MCF 10A (cell line): ENCODE measurements at regions of chr3 and their contacts with region 1.

Region 1: DNA sequence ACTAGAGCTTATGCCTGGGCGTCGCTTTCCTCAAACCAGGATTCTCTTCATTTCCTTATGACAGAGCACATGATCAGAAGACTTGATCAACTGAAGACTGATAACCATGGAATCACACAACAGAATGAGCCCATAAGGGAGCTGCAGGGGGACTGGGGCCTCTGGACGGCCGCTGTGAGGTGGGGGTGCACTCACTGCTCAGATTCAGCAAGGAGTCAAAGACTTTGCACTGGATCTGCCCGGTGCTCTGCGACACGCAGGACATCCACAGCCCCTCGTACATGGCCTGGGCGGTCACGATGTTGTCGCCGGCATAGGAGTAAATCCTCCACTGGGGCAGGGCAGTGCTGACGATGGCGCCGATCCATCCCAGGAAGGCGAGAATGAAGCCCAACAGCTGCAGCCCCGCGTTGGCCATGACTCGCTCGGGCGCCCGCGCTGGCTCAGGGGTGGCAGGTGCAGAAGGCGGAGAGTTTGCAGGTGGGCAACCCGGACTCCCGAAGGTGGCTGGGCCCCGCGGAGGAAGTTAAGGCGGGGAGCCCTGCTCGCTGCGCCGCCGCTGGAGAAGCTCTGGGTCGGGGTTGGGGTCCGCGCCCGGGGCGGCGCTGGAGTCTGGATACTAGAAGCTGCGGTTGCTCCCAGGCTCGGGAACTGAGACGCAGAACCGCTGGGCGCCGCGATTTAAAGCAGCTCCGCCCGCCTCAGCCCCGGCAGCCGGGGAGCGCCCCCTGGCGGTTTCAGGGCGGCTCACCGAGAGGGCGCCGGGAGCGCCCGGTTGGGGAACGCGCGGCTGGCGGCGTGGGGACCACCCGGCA is at the start of gene CLDN1:
- DNase-seq: peak; percentile 84
- H3K4me3 Mint-ChIP-seq: peak within 1 kb of the TSS; percentile 95
- H3K27ac Mint-ChIP-seq: peak within 1 kb of the TSS; percentile 96
- H3K4me1 Mint-ChIP-seq: peaks cover 51% of the 10 kb centered on the region
- H3K27me3 Mint-ChIP-seq: no peaks in the 10 kb centered on the region
- CTCF ChIP-seq: peak; percentile 92
- total RNA-seq, gene CLDN1: 197 and 263 TPM in 2 replicates

Region 2: GRCh38 chr3:189961525-189962161 is 360.4 kb before region 1 on chr3:
- CTCF ChIA-PET with region 1: interaction called, 8 read pairs
- POLR2A ChIA-PET with region 1: interaction called, 7 read pairs
- intact Hi-C with region 1: loop called (anchors 1 kb)
- DNase-seq: peak; percentile 88
- H3K4me3 Mint-ChIP-seq: no peak overlapping the region
- H3K27ac Mint-ChIP-seq: no peak overlapping the region
- H3K4me1 Mint-ChIP-seq: peaks cover 7% of the 10 kb centered on the region
- H3K27me3 Mint-ChIP-seq: no peaks in the 10 kb centered on the region
- CTCF ChIP-seq: peak; percentile 91

Region 3: GRCh38 chr3:190217081-190217480 is 104.9 kb before region 1 on chr3:
- CTCF ChIA-PET with region 1: interaction called, 195 read pairs
- POLR2A ChIA-PET with region 1: interaction called, 16 read pairs
- intact Hi-C with region 1: no loop called
- DNase-seq: peak; percentile 73
- H3K4me3 Mint-ChIP-seq: no peak overlapping the region
- H3K27ac Mint-ChIP-seq: no peak overlapping the region
- H3K4me1 Mint-ChIP-seq: no peaks in the 10 kb centered on the region
- H3K27me3 Mint-ChIP-seq: no peaks in the 10 kb centered on the region
- CTCF ChIP-seq: no peak

Region 4: GRCh38 chr3:190265796-190266195 is 56.2 kb before region 1 on chr3:
- CTCF ChIA-PET with region 1: interaction called, 9 read pairs
- POLR2A ChIA-PET with region 1: interaction called, 110 read pairs
- intact Hi-C with region 1: no loop called
- DNase-seq: peak; percentile 97
- H3K4me3 Mint-ChIP-seq: no peak overlapping the region
- H3K27ac Mint-ChIP-seq: peak overlapping the region; percentile 82
- H3K4me1 Mint-ChIP-seq: peaks cover 24% of the 10 kb centered on the region
- H3K27me3 Mint-ChIP-seq: no peaks in the 10 kb centered on the region
- CTCF ChIP-seq: no peak

Region 5: GRCh38 chr3:190339130-190339529 is 17.1 kb after region 1 on chr3:
- CTCF ChIA-PET with region 1: interaction called, 102 read pairs
- POLR2A ChIA-PET with region 1: interaction called, 215 read pairs
- intact Hi-C with region 1: no loop called
- DNase-seq: peak; percentile 51
- H3K4me3 Mint-ChIP-seq: no peak overlapping the region
- H3K27ac Mint-ChIP-seq: peak overlapping the region; percentile 55
- H3K4me1 Mint-ChIP-seq: peaks cover 37% of the 10 kb centered on the region
- H3K27me3 Mint-ChIP-seq: no peaks in the 10 kb centered on the region
- CTCF ChIP-seq: peak; percentile 17

Region 6: GRCh38 chr3:190366145-190366544 is 44.1 kb after region 1 on chr3:
- CTCF ChIA-PET with region 1: interaction called, 14 read pairs
- POLR2A ChIA-PET with region 1: interaction called, 58 read pairs
- intact Hi-C with region 1: no loop called
- DNase-seq: peak; percentile 79
- H3K4me3 Mint-ChIP-seq: no peak overlapping the region
- H3K27ac Mint-ChIP-seq: peak overlapping the region; percentile 87
- H3K4me1 Mint-ChIP-seq: peaks cover 37% of the 10 kb centered on the region
- H3K27me3 Mint-ChIP-seq: no peaks in the 10 kb centered on the region
- CTCF ChIP-seq: no peak

Region 7: GRCh38 chr3:190443257-190443656 is 121.3 kb after region 1 on chr3:
- CTCF ChIA-PET with region 1: interaction called, 3 read pairs
- POLR2A ChIA-PET with region 1: no interaction called
- intact Hi-C with region 1: loop called (anchors 5 kb)
- DNase-seq: peak; percentile 30
- H3K4me3 Mint-ChIP-seq: no peak overlapping the region
- H3K27ac Mint-ChIP-seq: no peak overlapping the region
- H3K4me1 Mint-ChIP-seq: no peaks in the 10 kb centered on the region
- H3K27me3 Mint-ChIP-seq: no peaks in the 10 kb centered on the region
- CTCF ChIP-seq: peak; percentile 36